ENCODE measurements at regions of chr15 and their contacts with region 1.

Region 1: DNA sequence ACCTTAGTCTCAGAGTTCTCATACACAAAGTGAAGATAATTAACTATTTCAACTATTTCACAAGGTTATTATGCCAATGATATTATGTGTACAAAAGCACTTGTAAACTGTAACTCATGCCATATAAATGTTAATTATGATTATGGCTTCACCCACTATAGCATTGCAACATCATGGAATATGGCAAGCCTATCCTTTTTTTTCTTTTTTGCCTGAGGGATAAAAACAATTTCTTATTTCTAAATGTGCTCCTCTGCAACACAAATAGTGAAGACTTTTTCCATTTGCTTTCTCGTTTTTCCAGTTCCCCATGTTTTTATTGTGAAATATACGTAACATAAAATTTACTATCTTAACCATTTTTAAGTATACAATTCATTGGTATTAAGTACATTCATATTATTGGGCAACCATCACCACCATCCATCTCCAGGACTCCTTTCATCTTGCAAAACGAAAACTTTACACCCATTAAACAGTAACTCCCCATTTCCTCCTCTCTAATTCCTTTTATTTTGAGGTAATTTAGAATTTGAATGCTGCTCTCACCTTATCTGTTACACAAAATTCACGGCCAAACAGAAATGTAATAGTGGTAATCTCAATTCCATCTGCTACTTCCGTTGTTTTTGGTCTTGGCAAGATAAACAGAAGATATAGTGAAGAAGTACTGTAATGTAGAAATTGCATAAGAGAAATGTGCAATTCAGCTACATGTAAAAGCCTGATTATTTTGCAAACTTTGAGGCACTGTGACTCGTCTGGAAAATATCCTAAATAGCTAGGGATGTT is 46.2 kb downstream of the NANOGP8 start:
- DNase-seq: no peak

Region 2: DNA sequence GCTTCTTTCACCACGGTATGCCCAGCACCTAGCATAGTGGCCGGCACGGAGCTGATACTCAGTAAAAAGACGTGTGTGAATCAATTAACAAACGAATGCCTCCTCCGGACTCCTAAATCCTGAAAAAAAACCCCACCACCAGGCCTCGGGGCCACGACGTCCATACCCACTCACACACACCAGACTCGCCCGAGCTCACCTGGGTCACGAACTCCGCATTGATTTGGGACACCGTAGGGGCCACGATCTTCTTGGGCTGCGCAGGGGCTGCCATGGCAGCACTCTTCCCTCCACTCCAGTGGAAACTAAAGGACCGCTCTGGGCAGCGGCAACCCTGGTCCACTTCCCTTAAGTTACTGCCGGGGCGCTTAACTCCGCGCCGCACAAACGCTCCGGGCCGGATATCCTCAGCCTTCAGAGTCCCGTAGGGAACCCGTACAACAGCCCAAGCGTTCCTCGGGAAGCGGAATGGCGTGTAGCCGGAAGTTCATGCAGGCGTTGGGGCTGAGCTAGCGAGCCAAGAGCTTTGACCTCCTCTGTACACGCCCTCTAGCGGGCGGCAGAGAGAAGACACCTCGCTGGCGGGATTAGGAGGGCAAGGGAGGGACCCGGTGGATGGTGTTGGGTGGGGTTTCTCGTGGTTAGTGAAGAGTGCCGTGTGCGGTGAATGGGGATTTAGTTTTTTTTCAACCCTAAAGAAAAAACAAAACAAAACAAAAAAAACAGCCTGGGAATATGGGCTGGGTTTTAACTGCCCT is 69.3 kb before region 1 on chr15 and contains the start of gene AQR:
- intact Hi-C with region 1: loop called (anchors 10 kb)
- DNase-seq: peak; percentile 98
- total RNA-seq, gene AQR: 13.2 TPM

Measured in cardiac septum (tissue), 1 donor.